ENCODE measurements at regions of chr2 and their contacts with region 1.

Region 1: DNA sequence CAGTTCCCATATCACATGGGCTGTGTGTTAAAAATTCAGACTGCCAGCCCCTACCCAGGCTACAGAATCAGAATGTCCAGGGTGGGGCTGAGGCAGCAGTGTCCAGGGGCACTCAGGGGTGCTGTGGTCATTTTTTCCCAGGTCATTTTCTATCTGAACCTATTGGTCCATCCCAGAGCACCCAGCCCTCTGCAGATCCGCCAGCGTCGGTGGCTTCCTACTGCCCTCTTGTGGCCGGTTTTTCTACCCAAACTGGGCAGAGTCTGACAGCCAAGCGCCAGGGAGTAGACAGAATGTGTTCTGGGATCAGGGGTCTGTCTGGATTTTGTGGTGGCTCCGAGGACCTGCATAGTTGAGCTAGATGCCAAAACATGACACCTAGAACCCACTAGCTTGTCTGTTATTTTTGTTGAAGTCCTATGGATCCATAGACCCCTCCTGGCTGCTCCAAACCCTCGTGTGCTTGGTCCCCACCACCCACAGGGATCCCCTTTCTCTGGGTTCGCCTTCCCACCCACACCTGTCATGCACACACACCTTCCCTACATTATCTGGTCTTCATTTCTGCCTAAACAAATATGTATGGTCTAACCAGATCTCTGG is 34.1 kb upstream of the RMDN2 start:
- DNase-seq: peak; percentile 46
- ATAC-seq: peak; percentile 59
- H3K4me3 Mint-ChIP-seq: no peak overlapping the region
- H3K27ac Mint-ChIP-seq: no peak overlapping the region
- H3K4me1 Mint-ChIP-seq: peaks cover 39% of the 10 kb centered on the region
- H3K27me3 Mint-ChIP-seq: no peaks in the 10 kb centered on the region
- CTCF ChIP-seq: no peak

Region 2: GRCh38 chr2:37156857-37157714 is 733.9 kb before region 1 on chr2 and contains the start of gene EIF2AK2:
- CTCF ChIA-PET with region 1: no interaction called
- POLR2A ChIA-PET with region 1: no interaction called
- intact Hi-C with region 1: loop called (anchors 5 kb)
- DNase-seq: peak; percentile 70
- ATAC-seq: peak; percentile 92
- H3K4me3 Mint-ChIP-seq: peak within 1 kb of the TSS; percentile 89
- H3K27ac Mint-ChIP-seq: peak within 1 kb of the TSS; percentile 86
- H3K4me1 Mint-ChIP-seq: peaks cover 40% of the 10 kb centered on the region
- H3K27me3 Mint-ChIP-seq: no peaks in the 10 kb centered on the region
- CTCF ChIP-seq: no peak
- total RNA-seq, gene EIF2AK2: 37.0 and 39.9 TPM in 2 replicates

Region 3: DNA sequence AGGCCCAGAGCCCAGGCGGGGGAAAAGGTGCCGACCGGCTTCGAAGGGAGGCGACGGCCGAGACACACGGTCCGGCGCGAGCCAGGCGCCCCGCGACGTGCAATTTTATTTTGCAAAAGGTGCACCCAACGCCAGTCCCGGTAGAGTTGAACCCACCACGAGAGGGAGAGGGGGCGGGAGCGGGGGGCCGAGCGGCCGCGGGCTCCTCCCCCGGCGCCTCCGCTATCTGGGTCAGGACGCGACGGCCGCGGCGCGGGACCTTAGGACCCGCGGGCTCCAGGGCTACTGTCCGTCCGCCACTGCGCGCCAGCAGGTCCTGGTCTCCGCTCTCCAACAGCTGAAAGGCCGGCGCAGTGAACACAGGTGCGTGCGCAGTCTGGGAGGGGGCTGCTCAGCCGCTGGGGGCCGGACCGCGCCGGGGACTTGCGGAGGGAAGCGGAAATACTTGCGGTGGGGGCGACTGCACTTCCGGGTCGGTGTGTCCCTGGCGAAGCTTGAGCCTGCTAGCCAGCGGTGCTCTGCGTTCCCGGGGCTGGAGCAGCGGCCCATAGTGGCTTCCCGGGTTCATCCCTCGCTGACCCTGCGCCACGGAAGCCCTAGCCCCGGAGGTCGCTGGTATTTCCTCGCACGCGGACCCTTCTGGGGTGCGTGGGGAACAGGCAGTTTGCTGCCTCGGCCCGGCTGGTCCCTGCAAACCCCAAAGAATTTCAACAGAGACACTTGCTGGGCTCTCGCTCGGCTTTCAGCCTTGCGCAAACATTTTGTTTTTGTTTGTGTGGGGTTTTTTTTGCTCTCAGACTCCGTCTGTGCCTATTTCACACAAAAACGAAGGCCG is 34.3 kb after region 1 on chr2 and contains the start of gene RMDN2:
- CTCF ChIA-PET with region 1: interaction called, 16 read pairs
- POLR2A ChIA-PET with region 1: interaction called, 10 read pairs
- intact Hi-C with region 1: loop called (anchors 1 kb)
- DNase-seq: peak; percentile 86
- ATAC-seq: peak; percentile 91
- H3K4me3 Mint-ChIP-seq: peak within 1 kb of the TSS; percentile 96
- H3K27ac Mint-ChIP-seq: peak within 1 kb of the TSS; percentile 93
- H3K4me1 Mint-ChIP-seq: peaks cover 28% of the 10 kb centered on the region
- H3K27me3 Mint-ChIP-seq: no peaks in the 10 kb centered on the region
- CTCF ChIP-seq: no peak
- total RNA-seq, gene RMDN2: 7.0 TPM in 2 replicates

Region 4: DNA sequence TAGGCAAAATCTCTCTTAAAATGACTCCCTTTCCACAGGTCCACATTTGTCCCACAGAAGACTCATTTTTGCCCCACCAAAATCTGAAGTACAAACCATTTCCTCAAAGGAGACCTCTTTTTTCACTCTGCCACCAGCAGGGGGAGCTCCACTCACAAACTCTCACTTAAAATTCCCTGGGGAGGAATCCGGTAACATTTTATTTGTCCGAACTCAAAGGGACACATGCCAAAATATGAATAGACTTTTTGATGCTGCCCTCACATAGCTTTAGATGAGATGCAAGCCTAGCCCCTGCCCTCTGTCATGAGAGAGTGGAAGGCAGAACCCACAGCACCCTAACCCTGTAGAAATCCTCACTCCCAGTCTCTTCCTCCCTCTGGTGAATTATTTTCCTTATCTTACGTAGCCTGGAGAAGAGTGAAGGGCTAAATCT is 91.2 kb after region 1 on chr2:
- CTCF ChIA-PET with region 1: no interaction called
- POLR2A ChIA-PET with region 1: no interaction called
- intact Hi-C with region 1: loop called (anchors 2 kb)
- DNase-seq: peak; percentile 47
- ATAC-seq: peak; percentile 47
- H3K4me3 Mint-ChIP-seq: peak overlapping the region; percentile 9
- H3K27ac Mint-ChIP-seq: no peak overlapping the region
- H3K4me1 Mint-ChIP-seq: peaks cover 7% of the 10 kb centered on the region
- H3K27me3 Mint-ChIP-seq: no peaks in the 10 kb centered on the region
- CTCF ChIP-seq: peak; percentile 18

Region 5: GRCh38 chr2:38115216-38116032 is 224.4 kb after region 1 on chr2:
- CTCF ChIA-PET with region 1: interaction called, 4 read pairs
- POLR2A ChIA-PET with region 1: no interaction called
- intact Hi-C with region 1: loop called (anchors 1 kb)
- DNase-seq: peak; percentile 56
- ATAC-seq: peak; percentile 77
- H3K4me3 Mint-ChIP-seq: no peak overlapping the region
- H3K27ac Mint-ChIP-seq: no peak overlapping the region
- H3K4me1 Mint-ChIP-seq: peaks cover 3% of the 10 kb centered on the region
- H3K27me3 Mint-ChIP-seq: peaks cover 31% of the 10 kb centered on the region
- CTCF ChIP-seq: peak; percentile 69

Region 6: GRCh38 chr2:38508311-38509039 is 617.5 kb after region 1 on chr2:
- CTCF ChIA-PET with region 1: no interaction called
- POLR2A ChIA-PET with region 1: no interaction called
- intact Hi-C with region 1: loop called (anchors 5 kb)
- DNase-seq: peak; percentile 46
- ATAC-seq: peak; percentile 79
- H3K4me3 Mint-ChIP-seq: no peak overlapping the region
- H3K27ac Mint-ChIP-seq: no peak overlapping the region
- H3K4me1 Mint-ChIP-seq: peaks cover 4% of the 10 kb centered on the region
- H3K27me3 Mint-ChIP-seq: no peaks in the 10 kb centered on the region
- CTCF ChIP-seq: no peak

Measured in activated B cell treated with CpG ODN at 0.5 μM for 24 hours (primary cell).